Brain microvascular endothelial cell (primary cell): ENCODE measurements at regions of chr16 and their contacts with region 1.

Region 1: DNA sequence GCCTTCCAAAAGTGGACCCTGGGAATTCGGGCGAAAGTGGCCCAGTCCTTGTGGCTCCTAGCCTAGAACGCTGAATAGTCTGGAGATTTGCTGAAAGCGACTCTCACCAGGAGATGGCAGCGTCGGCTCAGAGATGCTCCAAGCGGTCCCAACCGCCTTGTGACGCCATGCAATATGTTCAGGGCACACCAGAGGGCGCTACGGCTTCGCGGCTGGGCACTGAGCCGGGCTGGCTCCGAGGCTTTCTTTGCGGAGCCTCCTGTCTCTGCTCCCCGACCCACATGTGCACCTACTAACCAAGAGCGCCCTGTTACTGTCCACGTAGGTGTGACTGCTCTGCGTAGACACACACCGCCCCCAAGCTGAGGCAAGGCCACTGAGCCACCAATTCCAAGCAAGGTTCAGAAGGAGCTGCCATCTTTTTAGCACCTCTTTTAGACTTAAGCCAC is 36.9 kb downstream of the SYCE1L start:
- DNase-seq: peak; percentile 65
- H3K4me3 ChIP-seq: peak overlapping the region; percentile 34
- H3K27ac ChIP-seq: no peak overlapping the region
- H3K27me3 ChIP-seq: no peaks in the 10 kb centered on the region
- CTCF ChIP-seq: peak; percentile 99

Region 2: GRCh38 chr16:76756951-76757350 is 479.1 kb before region 1 on chr16:
- in situ Hi-C with region 1: no loop called
- DNase-seq: no peak
- H3K4me3 ChIP-seq: no peak overlapping the region
- H3K27ac ChIP-seq: no peak overlapping the region
- H3K27me3 ChIP-seq: no peaks in the 10 kb centered on the region
- CTCF ChIP-seq: no peak

Region 3: DNA sequence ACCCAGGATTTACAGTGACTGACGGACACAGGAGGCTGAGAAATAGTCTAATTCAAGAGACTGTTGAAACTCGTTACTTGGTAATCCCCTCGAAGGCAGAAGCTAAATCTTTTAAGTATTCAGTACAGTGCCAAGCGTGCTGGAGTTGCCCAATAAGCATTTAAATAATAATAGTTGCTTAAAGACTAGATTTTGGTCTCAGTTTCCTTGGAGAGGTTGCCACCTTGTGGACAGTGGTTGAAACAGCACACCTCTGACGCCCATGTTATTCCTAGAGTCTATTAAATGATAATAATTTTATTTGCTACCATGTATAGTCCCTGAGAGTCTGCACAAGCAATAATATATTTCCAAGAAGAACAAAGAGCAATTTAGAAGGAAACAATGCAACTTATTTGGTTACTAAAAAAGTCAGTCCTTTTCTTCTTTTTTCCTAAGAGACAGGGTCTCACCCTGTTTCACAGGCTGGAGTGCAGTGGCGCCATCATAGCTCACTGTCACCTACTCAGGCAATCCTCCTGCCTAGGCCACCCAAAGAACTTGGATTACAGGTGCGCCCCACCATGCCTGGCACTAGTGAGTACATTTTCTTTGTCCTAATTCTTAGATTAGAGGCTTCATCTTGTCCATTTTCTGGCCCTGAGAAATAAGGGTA is 348.2 kb after region 1 on chr16:
- in situ Hi-C with region 1: loop called (anchors 25 kb)
- DNase-seq: peak; percentile 73
- H3K4me3 ChIP-seq: no peak overlapping the region
- H3K27ac ChIP-seq: no peak overlapping the region
- H3K27me3 ChIP-seq: no peaks in the 10 kb centered on the region
- CTCF ChIP-seq: peak; percentile 86